Activated CD4-positive, alpha-beta T cell treated with anti-CD3 and anti-CD28 coated beads, Interleukin-2, amount 10 ng/mL, durations not matched to agents 7 days and 5 days (primary cell): ENCODE measurements at regions of chr9 and their contacts with region 1.

Region 1: DNA sequence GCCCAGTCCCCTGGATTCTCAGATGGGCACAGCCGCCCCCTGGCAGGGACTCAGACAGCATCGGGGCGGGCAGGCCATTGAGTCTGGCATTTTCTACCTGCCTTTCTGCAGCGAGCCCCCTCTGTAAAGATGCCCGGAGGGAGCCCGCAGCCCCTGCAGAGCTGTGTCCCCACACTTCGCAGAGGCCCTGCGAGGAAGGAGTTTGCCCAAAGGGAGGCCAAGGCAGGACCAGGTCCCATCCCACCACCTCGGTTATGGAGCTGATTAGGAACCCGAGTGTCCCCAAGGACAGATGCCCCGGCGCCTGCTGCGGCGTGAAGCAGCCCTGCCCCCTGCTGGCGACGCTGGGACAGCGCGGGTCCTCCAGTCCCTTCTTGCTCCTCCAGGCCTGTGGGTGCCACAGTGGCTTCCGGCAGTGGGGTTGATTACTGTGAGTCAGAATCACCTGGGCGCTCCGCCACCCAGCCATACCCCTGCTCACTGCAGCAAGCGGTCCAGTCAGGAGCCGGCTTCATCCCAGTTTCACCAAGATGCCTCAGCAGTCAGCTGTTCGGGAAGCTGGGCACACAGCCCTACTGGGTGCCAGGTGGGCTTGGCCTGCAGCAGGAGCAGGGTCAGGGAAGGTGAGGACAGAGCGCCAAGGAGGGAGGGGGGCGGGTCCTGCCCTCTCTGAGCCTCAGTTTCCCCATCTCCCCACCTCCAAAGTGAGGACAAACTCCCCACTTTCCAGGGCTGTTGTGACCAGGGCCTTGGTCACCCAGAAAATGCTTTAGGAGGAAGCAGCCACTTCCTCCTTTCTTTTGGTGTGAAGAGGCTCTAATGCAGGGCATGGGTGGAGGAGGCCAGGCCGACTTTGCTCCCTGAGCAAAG is 117.1 kb downstream of the RXRA start:
- DNase-seq: peak; percentile 90
- H3K4me3 Mint-ChIP-seq: no peak overlapping the region
- H3K27ac Mint-ChIP-seq: peak overlapping the region; percentile 51
- H3K4me1 Mint-ChIP-seq: peaks cover 13% of the 10 kb centered on the region
- H3K27me3 Mint-ChIP-seq: peaks cover 5% of the 10 kb centered on the region

Region 2: DNA sequence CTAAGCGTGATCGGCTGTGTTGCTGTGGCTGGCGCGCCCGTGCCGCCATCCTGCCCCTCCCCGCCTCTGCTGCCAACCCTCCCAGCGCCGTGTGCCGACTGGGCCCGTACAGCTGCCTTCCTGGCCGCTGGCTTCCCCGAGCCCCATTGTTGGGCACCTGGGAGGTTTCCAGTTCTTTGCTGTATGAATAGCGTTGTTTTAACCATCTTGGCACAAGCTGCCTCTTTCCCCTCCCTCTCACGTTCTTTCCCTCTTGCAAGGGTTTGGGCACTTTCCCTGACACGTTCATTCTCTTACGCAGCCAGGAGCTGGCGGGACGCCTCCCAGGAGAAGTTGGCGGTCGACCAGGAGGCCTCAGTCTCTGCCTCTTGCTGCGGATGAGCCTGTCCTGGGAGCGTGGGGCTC is 160.3 kb before region 1 on chr9:
- CTCF ChIA-PET with region 1: no interaction called
- POLR2A ChIA-PET with region 1: no interaction called
- DNase-seq: no peak
- H3K4me3 Mint-ChIP-seq: no peak overlapping the region
- H3K27ac Mint-ChIP-seq: no peak overlapping the region
- H3K4me1 Mint-ChIP-seq: no peaks in the 10 kb centered on the region
- H3K27me3 Mint-ChIP-seq: no peaks in the 10 kb centered on the region

Region 3: DNA sequence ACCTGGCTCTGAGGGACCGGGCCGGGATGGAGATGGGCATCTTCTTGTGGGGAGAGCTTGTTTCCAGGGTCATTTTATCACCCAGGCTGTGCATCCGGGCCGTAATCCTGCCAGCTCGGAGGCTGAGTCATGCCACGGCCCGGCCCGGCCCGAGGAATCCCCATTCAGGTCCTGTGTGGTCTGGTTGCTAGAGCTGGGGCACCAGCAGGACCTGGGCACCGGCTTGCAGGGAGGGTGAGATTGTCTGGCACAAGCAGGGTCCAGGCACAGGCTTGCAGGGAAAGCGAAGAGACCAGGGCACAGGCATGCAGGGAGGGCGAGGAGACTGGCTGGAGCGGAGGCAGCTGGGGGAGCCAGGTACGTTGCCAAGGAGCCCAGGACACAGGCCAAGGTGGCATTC is 10.3 kb before region 1 on chr9:
- CTCF ChIA-PET with region 1: interaction called, 16 read pairs
- POLR2A ChIA-PET with region 1: no interaction called
- DNase-seq: no peak
- H3K4me3 Mint-ChIP-seq: no peak overlapping the region
- H3K27ac Mint-ChIP-seq: no peak overlapping the region
- H3K4me1 Mint-ChIP-seq: no peaks in the 10 kb centered on the region
- H3K27me3 Mint-ChIP-seq: no peaks in the 10 kb centered on the region